WTC11 (cell line): ENCODE measurements at regions of chr12 and their contacts with region 1.

Region 1: GRCh38 chr12:47843226-47843990 is 23.7 kb upstream of the HDAC7 start:
- DNase-seq: no peak
- ATAC-seq: peak; percentile 42
- H3K4me3 Mint-ChIP-seq: no peak overlapping the region
- H3K27ac Mint-ChIP-seq: no peak overlapping the region
- H3K4me1 Mint-ChIP-seq: peaks cover 15% of the 10 kb centered on the region
- H3K27me3 Mint-ChIP-seq: peaks cover 2% of the 10 kb centered on the region; the same call in 1 of the 2 replicates
- CTCF ChIP-seq: no peak

Region 2: DNA sequence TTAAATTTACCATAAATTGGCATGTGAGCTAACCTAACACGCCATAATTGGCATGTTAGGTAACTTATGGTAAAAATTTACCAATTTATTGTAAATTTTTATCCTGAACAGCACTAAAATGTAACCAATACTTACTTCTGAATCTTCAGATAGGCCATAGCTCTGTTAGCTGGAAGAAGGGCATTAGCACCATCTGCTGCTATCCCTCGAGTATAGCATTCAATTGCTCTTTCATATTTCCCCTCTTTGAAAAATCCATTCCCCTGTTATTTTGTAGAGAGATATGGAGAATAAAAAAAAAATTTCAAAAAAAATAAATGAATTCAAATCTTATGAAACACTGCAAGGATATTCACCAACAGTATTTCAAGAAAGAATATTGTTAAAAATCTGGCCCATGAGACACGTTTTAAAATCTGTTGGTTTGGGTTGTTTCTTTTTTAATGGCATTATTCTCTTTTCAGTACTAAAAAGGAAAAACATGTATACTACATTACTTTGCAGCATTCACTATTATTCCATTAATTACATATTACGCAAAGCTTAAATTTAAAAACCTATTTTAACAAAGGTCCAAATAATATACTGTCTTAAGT is 156.7 kb before region 1 on chr12:
- CTCF ChIA-PET with region 1: no interaction called
- POLR2A ChIA-PET with region 1: no interaction called
- DNase-seq: no peak
- ATAC-seq: no peak
- H3K4me3 Mint-ChIP-seq: no peak overlapping the region
- H3K27ac Mint-ChIP-seq: no peak overlapping the region
- H3K4me1 Mint-ChIP-seq: 0 out of 2 replicates have a peak, but pooled peaks cover 4% of the 10 kb centered on the region
- H3K27me3 Mint-ChIP-seq: no peaks in the 10 kb centered on the region
- CTCF ChIP-seq: 0 out of 2 replicates have a peak, but pooled peaks have one; percentile 22

Region 3: GRCh38 chr12:47870175-47870781 is 26.9 kb after region 1 on chr12:
- CTCF ChIA-PET with region 1: interaction called, 18 read pairs
- POLR2A ChIA-PET with region 1: no interaction called
- DNase-seq: peak; percentile 68
- ATAC-seq: peak; percentile 100
- H3K4me3 Mint-ChIP-seq: no peak overlapping the region
- H3K27ac Mint-ChIP-seq: no peak overlapping the region
- H3K4me1 Mint-ChIP-seq: peaks cover 8% of the 10 kb centered on the region
- H3K27me3 Mint-ChIP-seq: peaks cover 5% of the 10 kb centered on the region
- CTCF ChIP-seq: peak; percentile 24; the same call in 1 of the 2 replicates